Activated CD4-positive, alpha-beta memory T cell treated with anti-CD3 and anti-CD28 coated beads for 36 hours (primary cell): ENCODE measurements at regions of chr2 and their contacts with region 1.

Region 1: DNA sequence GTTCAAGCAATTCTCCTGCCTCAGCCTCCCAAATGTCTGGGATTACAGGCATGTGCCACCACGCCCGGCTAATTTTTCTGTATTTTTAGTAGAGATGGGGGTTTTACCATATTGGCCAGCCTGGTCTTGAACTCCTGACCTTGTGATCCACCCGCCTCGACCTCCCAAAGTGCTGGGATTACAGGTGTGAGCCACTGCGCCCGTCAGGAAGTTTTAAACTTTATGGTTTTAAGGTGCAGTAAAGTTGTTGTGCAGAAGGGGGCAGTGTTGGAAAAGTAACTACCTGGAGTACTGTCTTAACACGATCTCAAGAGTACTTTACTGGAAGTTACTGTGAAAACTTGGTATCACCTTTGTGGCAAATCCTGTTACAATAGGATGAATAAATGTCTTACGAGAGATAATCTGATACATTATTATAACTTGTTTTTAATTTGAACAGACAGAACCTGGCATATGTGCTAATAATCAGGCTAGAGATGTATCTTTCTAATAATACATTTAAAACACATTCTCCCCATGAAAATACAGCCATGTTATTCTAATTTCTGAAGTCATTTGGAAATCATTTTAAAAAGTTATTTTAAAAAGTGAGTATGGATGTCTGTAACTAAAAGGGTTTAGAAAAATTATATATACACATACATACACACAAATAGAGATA is 10.8 kb downstream of the SPDYA start:
- DNase-seq: peak; percentile 62
- H3K4me3 Mint-ChIP-seq: no peak overlapping the region
- H3K27ac Mint-ChIP-seq: no peak overlapping the region
- H3K4me1 Mint-ChIP-seq: peaks cover 6% of the 10 kb centered on the region
- H3K27me3 Mint-ChIP-seq: no peaks in the 10 kb centered on the region

Region 2: DNA sequence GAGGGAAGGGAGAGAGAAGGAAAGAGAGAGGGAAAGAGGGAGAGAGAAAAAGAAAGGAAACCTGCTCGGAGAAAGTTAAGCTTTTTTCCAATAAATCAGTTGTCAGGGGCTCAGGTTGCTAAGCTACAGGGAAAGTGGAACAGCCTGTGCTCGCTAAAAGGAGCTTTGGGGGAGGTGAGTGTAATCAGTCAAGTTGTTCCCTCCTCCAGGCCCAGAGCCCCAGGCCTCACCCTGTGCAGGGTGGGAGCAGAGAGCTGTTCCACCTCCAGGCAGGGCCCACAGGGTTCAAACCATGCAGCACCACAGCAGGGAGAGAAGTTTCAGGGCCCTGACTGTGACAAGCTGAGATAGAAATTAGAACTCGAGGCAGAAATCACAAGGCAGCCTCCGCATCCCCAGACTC is 126.2 kb before region 1 on chr2:
- CTCF ChIA-PET with region 1: no interaction called
- POLR2A ChIA-PET with region 1: no interaction called
- intact Hi-C with region 1: no loop called
- DNase-seq: no peak
- H3K4me3 Mint-ChIP-seq: no peak overlapping the region
- H3K27ac Mint-ChIP-seq: no peak overlapping the region
- H3K4me1 Mint-ChIP-seq: no peaks in the 10 kb centered on the region
- H3K27me3 Mint-ChIP-seq: no peaks in the 10 kb centered on the region

Region 3: GRCh38 chr2:28870146-28870891 is 48.9 kb after region 1 on chr2 and contains the start of gene TRMT61B:
- CTCF ChIA-PET with region 1: interaction called, 4 read pairs
- POLR2A ChIA-PET with region 1: no interaction called
- intact Hi-C with region 1: loop called (anchors 2 kb)
- DNase-seq: peak; percentile 98
- H3K4me3 Mint-ChIP-seq: peak within 1 kb of the TSS; percentile 93
- H3K27ac Mint-ChIP-seq: peak within 1 kb of the TSS; percentile 89
- H3K4me1 Mint-ChIP-seq: peaks cover 29% of the 10 kb centered on the region
- H3K27me3 Mint-ChIP-seq: no peaks in the 10 kb centered on the region
- total RNA-seq, gene TRMT61B: 16.7 to 18.1 TPM

Region 4: GRCh38 chr2:28894470-28895177 is 73.2 kb after region 1 on chr2 and contains the start of gene WDR43:
- CTCF ChIA-PET with region 1: interaction called, 6 read pairs
- POLR2A ChIA-PET with region 1: no interaction called
- intact Hi-C with region 1: loop called (anchors 2 kb)
- DNase-seq: peak; percentile 98
- H3K4me3 Mint-ChIP-seq: peak within 1 kb of the TSS; percentile 93
- H3K27ac Mint-ChIP-seq: peak within 1 kb of the TSS; percentile 94
- H3K4me1 Mint-ChIP-seq: peaks cover 34% of the 10 kb centered on the region
- H3K27me3 Mint-ChIP-seq: no peaks in the 10 kb centered on the region
- total RNA-seq, gene WDR43: 72.7 to 84.8 TPM

Region 5: DNA sequence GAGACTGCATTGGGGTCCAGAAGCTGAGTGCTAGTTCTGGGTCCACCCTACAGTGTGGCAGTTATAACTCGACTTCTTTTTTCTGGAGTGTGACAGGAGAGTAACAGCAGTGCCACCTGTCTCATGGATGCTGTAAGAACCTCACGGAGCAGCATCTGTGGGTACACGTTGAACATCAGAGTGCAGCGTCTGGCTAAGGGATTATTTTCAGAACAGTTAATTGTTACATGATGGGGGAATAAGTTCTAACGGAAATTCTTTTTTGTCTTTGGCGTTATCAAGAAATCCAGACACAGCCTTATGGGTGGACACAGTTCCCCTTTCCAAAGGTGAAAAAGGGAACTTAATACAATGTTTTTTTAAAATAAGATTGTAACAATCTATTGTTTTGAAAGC is 131.4 kb after region 1 on chr2:
- CTCF ChIA-PET with region 1: interaction called, 3 read pairs
- POLR2A ChIA-PET with region 1: no interaction called
- intact Hi-C with region 1: loop called (anchors 1 kb)
- DNase-seq: no peak
- H3K4me3 Mint-ChIP-seq: no peak overlapping the region
- H3K27ac Mint-ChIP-seq: no peak overlapping the region
- H3K4me1 Mint-ChIP-seq: peaks cover 3% of the 10 kb centered on the region
- H3K27me3 Mint-ChIP-seq: no peaks in the 10 kb centered on the region

Region 6: DNA sequence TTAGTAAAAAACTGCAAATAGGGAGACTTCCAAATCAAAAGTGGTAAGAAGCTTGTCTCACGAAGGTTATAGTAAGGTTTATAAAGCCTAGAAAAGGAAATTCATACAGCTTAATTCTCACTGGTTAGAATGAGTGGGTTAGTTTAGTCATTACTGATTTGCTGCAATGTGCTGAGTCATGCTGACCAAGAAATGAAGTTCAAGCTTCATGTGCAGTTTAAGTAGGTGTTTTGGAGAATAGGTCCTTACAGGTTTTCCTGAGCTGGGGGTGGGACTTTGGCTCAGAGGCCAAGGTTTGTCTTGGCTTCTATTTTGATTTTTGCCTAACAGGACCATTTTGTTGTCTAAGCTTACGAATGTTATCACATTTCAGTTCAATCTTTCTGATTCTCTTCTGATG is 308.9 kb after region 1 on chr2:
- CTCF ChIA-PET with region 1: no interaction called
- POLR2A ChIA-PET with region 1: no interaction called
- intact Hi-C with region 1: no loop called
- DNase-seq: peak; percentile 67
- H3K4me3 Mint-ChIP-seq: no peak overlapping the region
- H3K27ac Mint-ChIP-seq: peak overlapping the region; percentile 70
- H3K4me1 Mint-ChIP-seq: peaks cover 48% of the 10 kb centered on the region
- H3K27me3 Mint-ChIP-seq: no peaks in the 10 kb centered on the region

Region 7: DNA sequence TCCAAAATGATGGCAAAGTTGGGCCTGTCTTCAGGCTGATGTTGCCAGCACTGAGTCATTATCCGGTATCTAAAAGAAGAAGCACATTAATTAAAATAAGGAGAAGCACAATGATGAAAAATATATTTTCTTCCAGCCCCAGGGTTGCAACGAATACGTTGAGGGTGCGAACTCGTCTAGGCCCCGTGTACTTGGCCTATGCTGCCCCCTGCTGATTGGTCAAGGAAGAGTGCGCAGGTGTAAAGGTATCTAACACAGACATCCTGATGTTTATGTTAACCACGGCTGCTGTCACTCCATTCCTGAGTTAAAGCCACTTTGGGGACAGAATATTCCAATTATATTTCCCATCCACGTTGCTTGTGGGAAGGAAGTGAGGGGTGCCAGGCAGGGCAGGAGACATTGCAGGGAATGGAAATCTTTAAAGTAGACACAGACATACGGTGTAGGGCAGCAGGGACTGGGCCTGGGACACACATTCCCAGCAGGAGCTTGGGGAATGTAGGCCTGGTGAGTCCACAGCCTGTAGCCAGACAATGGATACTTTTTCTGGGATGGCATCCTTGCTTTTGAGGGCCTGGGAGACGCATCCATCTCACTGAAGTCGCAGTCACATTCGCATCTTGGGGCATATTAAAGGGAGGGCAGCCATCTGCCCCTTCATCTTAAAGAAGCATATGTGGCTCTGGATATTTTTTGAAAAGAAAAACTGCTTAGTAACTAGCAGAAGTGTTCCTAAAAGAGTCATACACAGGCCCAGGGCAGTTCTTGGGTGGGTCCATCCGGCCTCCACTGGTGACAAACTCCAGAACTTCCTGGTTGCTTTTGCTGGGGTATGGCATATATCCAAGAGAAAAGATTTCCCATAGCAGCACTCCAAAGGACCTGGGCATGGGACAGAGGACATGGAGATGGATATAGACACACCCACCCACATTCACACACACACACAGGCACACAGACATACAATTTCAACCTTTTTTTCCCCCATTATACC is 375.7 kb after region 1 on chr2:
- CTCF ChIA-PET with region 1: interaction called, 3 read pairs
- POLR2A ChIA-PET with region 1: no interaction called
- intact Hi-C with region 1: loop called (anchors 1 kb)
- DNase-seq: peak; percentile 85
- H3K4me3 Mint-ChIP-seq: no peak overlapping the region
- H3K27ac Mint-ChIP-seq: no peak overlapping the region
- H3K4me1 Mint-ChIP-seq: no peaks in the 10 kb centered on the region
- H3K27me3 Mint-ChIP-seq: no peaks in the 10 kb centered on the region